ENCODE measurements at regions of chr14 and their contacts with region 1.

Region 1: DNA sequence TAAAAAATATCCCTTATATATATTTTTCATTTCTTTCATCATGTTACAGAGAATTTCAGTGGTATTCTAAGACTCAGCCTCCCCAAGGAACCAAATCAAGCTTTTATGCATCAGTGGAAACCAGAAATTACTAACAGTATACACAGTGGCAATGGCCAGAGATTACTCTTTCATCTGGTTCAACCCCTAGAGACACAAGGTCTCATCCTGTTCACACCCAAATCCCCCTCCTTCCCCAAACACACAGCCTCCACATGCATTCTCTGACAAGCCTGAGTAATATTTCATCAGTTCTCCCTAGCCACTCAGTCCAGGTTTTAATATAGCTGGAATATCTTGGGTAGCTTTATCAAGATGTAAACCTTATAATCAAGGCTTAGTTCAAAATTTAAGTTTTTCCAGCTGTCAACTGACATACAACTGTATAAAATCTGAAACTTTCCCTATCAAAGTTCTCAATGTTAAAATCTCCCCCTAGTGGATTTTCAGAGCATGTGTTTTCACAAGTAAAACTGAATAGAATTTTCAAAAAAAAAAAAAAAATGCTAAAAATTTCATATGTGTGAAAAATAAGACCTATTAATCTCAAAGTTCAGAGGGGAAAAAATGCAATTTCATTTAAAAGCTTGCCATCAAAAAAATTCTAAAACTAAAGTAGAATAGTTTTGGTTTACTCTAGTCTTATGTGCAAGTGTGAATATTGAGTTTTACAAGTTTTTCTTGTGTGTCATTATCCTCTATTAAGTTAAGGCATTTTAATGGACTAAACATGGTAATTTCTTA is 10.5 kb upstream of the SSTR1 start:
- DNase-seq: no peak
- H3K4me3 ChIP-seq: no peak overlapping the region
- H3K27ac ChIP-seq: no peak overlapping the region
- H3K27me3 ChIP-seq: no peaks in the 10 kb centered on the region
- CTCF ChIP-seq: peak; percentile 67

Region 2: GRCh38 chr14:37985826-37986470 is 211.2 kb before region 1 on chr14:
- CTCF ChIA-PET with region 1: interaction called, 22 read pairs
- POLR2A ChIA-PET with region 1: no interaction called
- DNase-seq: peak; percentile 11
- H3K4me3 ChIP-seq: no peak overlapping the region
- H3K27ac ChIP-seq: no peak overlapping the region
- H3K27me3 ChIP-seq: no peaks in the 10 kb centered on the region
- CTCF ChIP-seq: peak; percentile 82

Region 3: GRCh38 chr14:38186216-38186615 is 11.0 kb before region 1 on chr14:
- CTCF ChIA-PET with region 1: interaction called, 18 read pairs
- POLR2A ChIA-PET with region 1: no interaction called
- DNase-seq: no peak
- H3K4me3 ChIP-seq: no peak overlapping the region
- H3K27ac ChIP-seq: no peak overlapping the region
- H3K27me3 ChIP-seq: no peaks in the 10 kb centered on the region
- CTCF ChIP-seq: no peak

Region 4: GRCh38 chr14:38208618-38209562 is 11.7 kb after region 1 on chr14:
- CTCF ChIA-PET with region 1: interaction called, 39 read pairs
- POLR2A ChIA-PET with region 1: no interaction called
- DNase-seq: no peak
- H3K4me3 ChIP-seq: peak overlapping the region; percentile 65
- H3K27ac ChIP-seq: no peak overlapping the region
- H3K27me3 ChIP-seq: peaks cover 3% of the 10 kb centered on the region
- CTCF ChIP-seq: peak; percentile 58

Region 5: DNA sequence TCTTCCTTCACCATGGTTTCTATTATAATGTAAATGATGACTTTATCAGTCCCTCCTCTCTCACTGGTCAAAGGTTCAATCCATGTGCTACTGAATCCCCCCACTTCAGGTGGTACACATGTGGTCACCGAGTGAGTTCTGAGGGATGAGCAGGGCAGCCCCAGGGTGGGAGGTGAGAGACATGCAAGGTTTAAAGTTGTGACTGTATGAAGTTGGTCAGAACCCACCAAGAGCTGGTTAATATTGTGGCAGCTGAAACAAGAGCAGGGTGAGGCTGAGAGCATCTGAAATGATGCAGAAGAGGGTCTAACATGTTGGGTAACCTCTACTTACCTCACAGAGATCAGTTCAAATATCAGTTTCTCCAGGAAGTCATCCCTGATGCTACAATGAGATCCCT is 1679.7 kb after region 1 on chr14:
- CTCF ChIA-PET with region 1: no interaction called
- POLR2A ChIA-PET with region 1: no interaction called
- DNase-seq: no peak
- H3K4me3 ChIP-seq: no peak overlapping the region
- H3K27ac ChIP-seq: no peak overlapping the region
- H3K27me3 ChIP-seq: no peaks in the 10 kb centered on the region
- CTCF ChIP-seq: no peak